ENCODE measurements at regions of chr17 and their contacts with region 1.

Region 1: DNA sequence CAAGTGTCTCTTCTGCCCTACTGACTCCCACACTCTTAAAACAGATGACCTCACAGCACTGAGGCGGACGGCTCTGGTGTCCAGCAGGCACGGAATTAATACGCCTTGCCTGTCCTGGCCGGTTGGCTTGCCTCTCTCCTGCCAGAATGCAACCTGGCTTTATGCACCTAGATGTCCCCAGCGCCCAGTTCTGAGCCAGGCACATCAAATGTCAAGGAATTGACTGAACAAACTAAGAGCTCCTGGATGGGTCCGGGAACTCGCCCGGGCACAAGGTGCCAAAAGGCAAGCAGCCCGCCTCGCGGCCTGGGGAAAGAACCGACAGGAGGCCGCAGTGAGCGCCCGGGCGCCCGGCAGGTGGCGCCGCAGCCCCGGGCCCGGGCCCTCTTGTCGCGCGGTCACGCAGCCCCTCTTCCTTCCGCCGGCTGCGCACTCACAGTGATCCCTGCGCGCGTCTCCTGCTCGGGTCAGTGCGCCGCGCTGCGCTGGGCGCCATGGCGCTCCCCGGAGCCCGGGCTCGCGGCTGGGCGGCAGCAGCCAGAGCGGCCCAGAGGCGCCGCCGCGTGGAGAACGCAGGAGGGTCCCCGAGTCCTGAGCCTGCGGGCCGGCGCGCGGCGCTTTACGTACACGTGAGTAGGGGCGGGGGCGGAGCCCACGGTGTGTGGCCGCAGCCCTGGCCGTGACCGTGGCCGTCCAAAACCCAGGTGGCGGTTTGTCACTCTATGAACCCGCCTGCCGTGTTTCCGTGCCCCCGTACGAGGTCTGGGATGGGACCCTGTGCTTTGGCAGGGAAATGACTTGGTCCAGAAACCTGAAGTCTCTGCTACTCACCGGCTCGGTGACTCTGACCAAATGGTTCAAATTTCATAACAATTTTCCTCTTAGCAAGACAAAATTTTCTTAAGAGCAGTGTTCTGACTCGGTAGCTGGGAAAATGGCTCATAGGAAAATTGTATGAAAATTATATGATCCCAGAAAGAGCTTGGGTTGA is at the start of gene RSAD1:
- H3K4me3 ChIP-seq: peak within 1 kb of the TSS; percentile 64
- H3K27ac ChIP-seq: peak within 1 kb of the TSS; percentile 88
- H3K4me1 ChIP-seq: peaks cover 6% of the 10 kb centered on the region
- CTCF ChIP-seq: peak; percentile 83; the same call in 1 of the 2 replicates

Region 2: DNA sequence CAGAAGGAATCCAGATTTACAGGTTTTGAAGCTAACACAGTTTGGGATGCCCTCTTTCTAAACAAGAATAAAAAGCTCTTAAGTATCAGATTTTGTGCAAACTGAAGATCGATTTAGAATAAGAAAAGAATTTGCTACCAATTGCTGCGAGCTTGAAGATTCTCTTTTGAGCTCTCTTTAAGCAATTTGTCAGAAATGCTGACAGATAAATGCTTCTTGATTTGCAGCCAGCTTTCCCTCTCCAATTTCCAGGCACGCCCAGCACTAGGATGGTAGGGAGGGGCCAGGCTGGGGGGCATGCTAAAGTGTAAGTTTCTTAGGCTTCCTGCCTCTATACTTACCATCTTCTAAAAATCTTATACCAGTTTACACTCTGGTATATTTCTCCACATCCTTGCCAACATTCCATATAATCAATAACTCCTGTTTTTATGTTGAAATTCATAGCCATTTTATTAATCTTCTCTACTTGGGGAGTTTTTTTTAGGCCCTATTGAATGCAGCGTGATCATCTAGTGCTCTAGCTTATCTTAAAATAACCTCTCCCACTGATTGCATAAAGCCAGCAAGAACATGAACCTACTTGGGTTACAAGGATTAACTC is 35.2 kb before region 1 on chr17:
- CTCF ChIA-PET with region 1: interaction called, 13 read pairs
- POLR2A ChIA-PET with region 1: interaction called, 7 read pairs
- H3K4me3 ChIP-seq: no peak overlapping the region
- H3K27ac ChIP-seq: peak overlapping the region; percentile 32; the same call in 1 of the 2 replicates
- H3K4me1 ChIP-seq: peaks cover 20% of the 10 kb centered on the region
- CTCF ChIP-seq: no peak

Region 3: DNA sequence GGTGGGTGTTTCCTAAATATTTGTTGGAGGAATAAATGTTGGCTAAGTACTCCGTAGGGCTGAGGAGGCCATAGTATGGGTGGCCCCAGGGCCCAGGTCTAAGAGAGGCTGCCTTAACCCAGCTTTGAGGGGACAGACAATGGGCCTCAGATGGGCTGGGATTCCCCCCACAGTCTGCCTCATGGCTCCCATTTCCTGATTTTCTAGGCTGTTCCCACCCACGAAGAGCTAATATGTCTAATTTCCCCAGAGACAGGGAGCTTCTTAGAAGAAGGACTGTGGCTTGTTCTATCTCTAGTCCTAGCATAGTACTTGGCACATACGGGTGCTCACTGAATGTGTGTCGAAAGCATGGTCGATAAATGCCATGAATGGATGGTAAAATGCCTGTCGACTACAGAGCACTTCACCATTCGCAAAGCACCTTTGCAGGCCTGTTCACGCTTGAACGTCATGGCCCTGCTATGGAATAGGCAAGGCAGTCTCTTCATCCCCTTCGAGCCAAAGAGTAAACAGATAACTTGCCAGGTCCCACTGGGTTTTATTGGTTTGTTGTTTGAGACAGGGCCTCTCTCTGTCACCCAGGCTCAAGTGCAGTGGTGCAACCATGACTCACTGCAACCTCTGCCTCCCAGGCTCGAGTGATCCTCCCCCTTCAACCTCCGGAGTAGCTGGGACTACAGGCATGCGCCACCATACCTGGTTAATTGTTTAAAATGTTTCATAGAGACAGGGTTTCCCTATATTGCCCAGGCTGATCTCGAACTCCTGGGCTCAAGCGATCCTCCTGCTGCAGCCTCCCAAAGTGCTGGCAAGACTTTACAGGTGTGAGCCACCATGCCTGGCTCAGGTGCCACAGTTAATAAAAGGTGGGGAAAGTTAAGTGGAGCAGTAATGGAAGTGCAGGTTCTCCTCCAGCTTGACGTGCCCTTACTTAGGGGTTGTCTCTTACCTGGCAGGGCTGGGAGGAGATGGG is 19.7 kb before region 1 on chr17:
- CTCF ChIA-PET with region 1: interaction called, 29 read pairs
- POLR2A ChIA-PET with region 1: no interaction called
- H3K4me3 ChIP-seq: no peak overlapping the region
- H3K27ac ChIP-seq: peak overlapping the region; percentile 25; the same call in 1 of the 2 replicates
- H3K4me1 ChIP-seq: peaks cover 17% of the 10 kb centered on the region
- CTCF ChIP-seq: no peak

Region 4: GRCh38 chr17:50495217-50495823 is 16.6 kb after region 1 on chr17:
- CTCF ChIA-PET with region 1: interaction called, 95 read pairs
- POLR2A ChIA-PET with region 1: no interaction called
- H3K4me3 ChIP-seq: no peak overlapping the region
- H3K27ac ChIP-seq: no peak overlapping the region
- H3K4me1 ChIP-seq: 0 out of 2 replicates have a peak, but pooled peaks cover 3% of the 10 kb centered on the region
- CTCF ChIP-seq: no peak

Region 5: DNA sequence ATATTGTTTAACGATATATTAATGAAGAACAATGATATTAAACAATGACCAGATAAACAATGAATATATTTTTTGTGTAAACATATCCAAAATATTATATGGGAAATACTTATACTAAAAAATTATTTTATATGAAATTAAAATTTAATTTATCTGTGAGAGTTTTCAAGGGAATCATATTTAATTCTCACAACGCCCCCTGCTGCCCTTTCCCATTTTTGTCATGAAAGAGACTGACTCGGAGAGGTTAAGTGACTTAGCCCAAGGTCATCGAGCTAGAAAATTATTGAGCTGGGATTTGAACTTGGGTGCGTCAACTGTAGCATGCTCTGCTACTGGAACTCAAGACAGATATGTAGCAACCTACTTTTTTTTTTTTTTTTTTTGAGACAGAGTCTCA is 22.4 kb after region 1 on chr17:
- CTCF ChIA-PET with region 1: interaction called, 95 read pairs
- POLR2A ChIA-PET with region 1: no interaction called
- H3K4me3 ChIP-seq: no peak overlapping the region
- H3K27ac ChIP-seq: no peak overlapping the region
- H3K4me1 ChIP-seq: no peaks in the 10 kb centered on the region
- CTCF ChIP-seq: no peak

Region 6: GRCh38 chr17:50541716-50542688 is 63.3 kb after region 1 on chr17:
- CTCF ChIA-PET with region 1: interaction called, 21 read pairs
- POLR2A ChIA-PET with region 1: interaction called, 4 read pairs
- H3K4me3 ChIP-seq: peak overlapping the region; percentile 51
- H3K27ac ChIP-seq: peak overlapping the region; percentile 42; the same call in 1 of the 2 replicates
- H3K4me1 ChIP-seq: peaks cover 8% of the 10 kb centered on the region
- CTCF ChIP-seq: peak; percentile 90; the same call in 1 of the 2 replicates

Measured in HEK293 (cell line).